GM12878 (cell line): ENCODE measurements at regions of chr11 and their contacts with region 1.

Region 1: DNA sequence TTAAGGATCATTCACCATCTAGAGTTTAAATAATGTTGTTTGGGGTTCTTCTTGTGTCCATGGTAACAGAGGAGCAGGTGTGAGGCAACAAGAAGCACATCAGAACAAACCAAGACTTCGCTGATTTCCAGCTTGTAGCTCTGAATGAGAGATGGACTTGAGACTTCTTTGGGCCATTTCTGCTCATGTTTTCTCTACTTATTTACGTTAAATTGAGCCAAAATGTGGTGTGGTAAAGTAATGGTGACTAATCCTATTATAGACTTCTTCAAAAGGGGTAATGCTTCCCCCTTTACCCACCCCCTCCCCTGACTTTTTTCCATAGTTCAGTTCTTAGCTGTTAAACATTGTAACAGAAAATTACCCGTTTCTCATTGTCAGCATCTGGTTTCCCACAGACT is 65.2 kb downstream of the CSTPP1 start:
- DNase-seq: no peak
- ATAC-seq: no peak
- H3K4me3 ChIP-seq: no peak overlapping the region
- H3K27ac ChIP-seq: no peak overlapping the region
- H3K4me1 ChIP-seq: peaks cover 32% of the 10 kb centered on the region
- H3K27me3 ChIP-seq: no peaks in the 10 kb centered on the region
- CTCF ChIP-seq: no peak
- EP300 ChIP-seq: no peak
- POLR2A ChIP-seq: no peak
- RAD21 ChIP-seq: no peak

Region 2: GRCh38 chr11:46876471-46876870 is 125.3 kb before region 1 on chr11:
- CTCF ChIA-PET with region 1: no interaction called
- POLR2A ChIA-PET with region 1: no interaction called
- RAD21 ChIA-PET with region 1: no interaction called
- SMC1A ChIA-PET with region 1: no interaction called
- in situ Hi-C with region 1: no loop called
- intact Hi-C with region 1: no loop called
- DNase-seq: no peak
- ATAC-seq: no peak
- H3K4me3 ChIP-seq: no peak overlapping the region
- H3K27ac ChIP-seq: no peak overlapping the region
- H3K4me1 ChIP-seq: no peaks in the 10 kb centered on the region
- H3K27me3 ChIP-seq: peaks cover 0 to 2% of the 10 kb centered on the region in 2 experiments; a peak in 2 of 4 replicates
- CTCF ChIP-seq: no peak
- EP300 ChIP-seq: no peak
- POLR2A ChIP-seq: no peak
- RAD21 ChIP-seq: no peak

Region 3: DNA sequence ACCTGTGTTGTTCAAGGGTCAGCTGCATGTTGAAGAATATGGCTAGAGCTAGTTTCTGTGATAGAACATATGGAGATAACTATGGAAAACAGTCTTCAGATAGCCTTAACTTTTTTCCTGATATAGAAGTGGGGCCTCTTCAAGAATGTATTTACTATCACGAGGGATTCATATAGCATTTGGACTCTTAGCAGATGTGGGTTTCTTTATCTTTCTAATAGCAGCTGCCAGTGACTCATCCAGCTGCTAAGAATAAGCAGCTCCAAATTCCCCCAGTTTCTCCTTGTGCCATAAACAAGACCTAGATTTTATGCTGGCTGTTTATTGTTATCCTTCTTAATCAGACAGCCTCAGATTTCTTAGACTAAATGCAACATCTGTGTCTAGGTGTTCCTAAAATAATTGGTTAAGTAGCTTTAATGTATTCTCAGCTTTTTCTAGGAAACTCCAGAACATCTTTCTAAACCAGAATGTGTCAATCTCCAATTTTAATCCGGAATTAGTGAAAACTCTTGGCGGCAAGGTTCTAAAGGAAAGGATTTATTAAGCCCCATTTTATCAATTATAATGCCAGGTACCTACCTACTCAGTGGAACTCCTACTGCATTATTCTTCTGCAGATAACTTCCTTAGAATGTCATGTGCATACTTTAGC is 54.6 kb after region 1 on chr11:
- CTCF ChIA-PET with region 1: no interaction called
- POLR2A ChIA-PET with region 1: interaction called, 10 read pairs
- RAD21 ChIA-PET with region 1: no interaction called
- SMC1A ChIA-PET with region 1: no interaction called
- in situ Hi-C with region 1: no loop called
- intact Hi-C with region 1: no loop called
- DNase-seq: no peak
- ATAC-seq: peak; percentile 42; the same call in 2 of the 3 replicates
- H3K4me3 ChIP-seq: no peak overlapping the region
- H3K27ac ChIP-seq: no peak overlapping the region
- H3K4me1 ChIP-seq: 0 out of 2 replicates have a peak, but pooled peaks cover 3% of the 10 kb centered on the region
- H3K27me3 ChIP-seq: no peaks in the 10 kb centered on the region
- CTCF ChIP-seq: no peak
- EP300 ChIP-seq: no peak
- POLR2A ChIP-seq: no peak
- RAD21 ChIP-seq: no peak

Region 4: GRCh38 chr11:47161134-47161854 is 159.5 kb after region 1 on chr11:
- CTCF ChIA-PET with region 1: no interaction called
- POLR2A ChIA-PET with region 1: no interaction called
- RAD21 ChIA-PET with region 1: no interaction called
- SMC1A ChIA-PET with region 1: no interaction called
- in situ Hi-C with region 1: no loop called
- intact Hi-C with region 1: no loop called
- DNase-seq: no peak
- ATAC-seq: peak; percentile 94
- H3K4me3 ChIP-seq: no peak overlapping the region
- H3K27ac ChIP-seq: no peak overlapping the region
- H3K4me1 ChIP-seq: no peaks in the 10 kb centered on the region
- H3K27me3 ChIP-seq: no peaks in the 10 kb centered on the region
- CTCF ChIP-seq: peak; percentile 72 to 81 (median 77)
- EP300 ChIP-seq: no peak
- POLR2A ChIP-seq: peak; percentile 51
- RAD21 ChIP-seq: peak; percentile 78